Gastrocnemius medialis (tissue), 4 donors: ENCODE measurements at regions of chr9 and their contacts with region 1.

Region 1: GRCh38 chr9:119273984-119274665 is 95.1 kb downstream of the BRINP1 start:
- DNase-seq: peak; percentile 8 to 34
- ATAC-seq: peak; percentile 98 to 99
- H3K4me3 ChIP-seq: no peak overlapping the region
- H3K27ac ChIP-seq: peak overlapping the region; percentile 61 to 79 (median 67)
- H3K4me1 ChIP-seq: peaks cover 7 to 9% of the 10 kb centered on the region in 2 donors
- H3K27me3 ChIP-seq: no peaks in the 10 kb centered on the region
- CTCF ChIP-seq: no peak
- POLR2A ChIP-seq: no peak

Region 2: GRCh38 chr9:119137479-119137878 is 136.6 kb before region 1 on chr9:
- in situ Hi-C with region 1: no loop called
- intact Hi-C with region 1: no loop called
- DNase-seq: no peak
- ATAC-seq: no peak
- H3K4me3 ChIP-seq: no peak overlapping the region
- H3K27ac ChIP-seq: no peak overlapping the region
- H3K4me1 ChIP-seq: no peaks in the 10 kb centered on the region
- H3K27me3 ChIP-seq: no peaks in the 10 kb centered on the region
- CTCF ChIP-seq: no peak
- POLR2A ChIP-seq: no peak

Region 3: GRCh38 chr9:119179701-119180100 is 94.4 kb before region 1 on chr9:
- in situ Hi-C with region 1: no loop called
- intact Hi-C with region 1: loop called (anchors 10 kb)
- DNase-seq: no peak
- ATAC-seq: no peak
- H3K4me3 ChIP-seq: no peak overlapping the region
- H3K27ac ChIP-seq: no peak overlapping the region
- H3K4me1 ChIP-seq: peaks cover 0 to 4% of the 10 kb centered on the region in 2 donors
- H3K27me3 ChIP-seq: no peaks in the 10 kb centered on the region
- CTCF ChIP-seq: no peak
- POLR2A ChIP-seq: no peak

Region 4: DNA sequence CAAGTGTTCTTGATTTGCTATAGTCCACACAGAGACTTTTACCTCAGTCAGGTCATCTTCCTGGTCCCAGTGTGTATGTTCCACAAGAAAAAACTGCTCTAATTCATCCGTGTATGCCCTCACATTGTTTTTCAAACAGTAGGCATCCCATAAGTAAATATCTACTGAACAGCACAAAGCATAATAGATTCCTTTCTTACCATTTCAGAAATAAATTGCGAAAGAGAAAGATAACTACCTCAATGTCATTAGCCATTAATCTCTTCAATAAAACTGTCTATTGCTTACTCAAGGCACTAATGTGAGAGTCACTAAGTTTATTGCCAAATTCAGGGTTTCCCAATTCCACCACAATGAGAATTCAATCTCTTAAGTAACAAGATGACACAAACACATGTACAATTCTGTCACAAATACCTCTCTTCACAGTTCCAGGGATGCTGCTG is 1509.5 kb after region 1 on chr9:
- in situ Hi-C with region 1: no loop called
- intact Hi-C with region 1: no loop called
- DNase-seq: no peak
- ATAC-seq: peak in 1 of 2 donors; percentile 58
- H3K4me3 ChIP-seq: no peak overlapping the region
- H3K27ac ChIP-seq: peak overlapping the region in 1 of 4 donors; percentile 23
- H3K4me1 ChIP-seq: peaks cover 13 to 17% of the 10 kb centered on the region in 2 donors
- H3K27me3 ChIP-seq: no peaks in the 10 kb centered on the region
- CTCF ChIP-seq: no peak
- POLR2A ChIP-seq: no peak